CD4-positive, alpha-beta memory T cell (primary cell): ENCODE measurements at regions of chr19 and their contacts with region 1.

Region 1: GRCh38 chr19:32224371-32225244 is 120.8 kb upstream of the ZNF507 start:
- DNase-seq: peak in 4 of 5 donors; percentile 43 to 50 (median 46)
- H3K4me3 ChIP-seq: no peak overlapping the region
- H3K4me3 Mint-ChIP-seq: peak overlapping the region; percentile 71 to 85 (median 80)
- H3K27ac ChIP-seq: no peak overlapping the region
- H3K27ac Mint-ChIP-seq: no peak overlapping the region
- H3K4me1 ChIP-seq: peaks cover 11% of the 10 kb centered on the region
- H3K4me1 Mint-ChIP-seq: peaks cover 5 to 16% (median 6%) of the 10 kb centered on the region in 4 donors
- H3K27me3 ChIP-seq: peaks cover 14% of the 10 kb centered on the region
- H3K27me3 Mint-ChIP-seq: peaks cover 17 to 39% of the 10 kb centered on the region in 2 donors

Region 2: DNA sequence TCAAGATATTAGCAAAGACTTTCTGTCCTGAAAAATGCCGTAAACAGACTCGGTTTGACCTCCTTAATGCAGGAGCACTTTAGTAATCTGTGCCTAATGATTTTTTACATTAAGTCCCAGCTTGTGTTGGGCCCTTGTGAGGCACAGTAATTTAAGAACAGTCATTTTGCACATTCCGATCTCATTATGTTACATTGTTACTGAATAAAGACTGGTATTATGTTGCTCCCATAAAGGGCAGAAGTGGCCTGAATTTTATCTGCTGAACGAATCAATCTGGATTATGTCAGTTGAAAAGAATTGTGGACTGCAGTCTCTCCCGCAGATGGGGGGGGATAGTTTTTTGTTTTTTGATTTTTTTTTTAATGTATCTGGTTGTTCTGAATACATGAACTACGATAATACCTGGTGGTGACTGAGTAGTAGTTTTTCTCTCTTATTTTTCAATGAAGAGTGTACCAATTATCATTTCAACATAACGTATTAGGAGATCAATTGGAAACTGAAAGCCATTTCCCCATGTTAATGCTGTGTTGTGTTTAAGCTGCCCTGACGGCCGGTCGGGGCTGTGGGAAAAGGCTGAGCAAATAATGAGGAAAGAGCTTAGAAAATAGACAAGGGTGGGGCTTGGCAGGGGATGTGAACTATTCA is 1562.3 kb before region 1 on chr19:
- CTCF ChIA-PET with region 1: interaction called, 71 read pairs
- POLR2A ChIA-PET with region 1: no interaction called
- intact Hi-C with region 1: loop called (anchors 1 kb)
- DNase-seq: no peak
- H3K4me3 ChIP-seq: no peak overlapping the region
- H3K4me3 Mint-ChIP-seq: no peak overlapping the region
- H3K27ac ChIP-seq: no peak overlapping the region
- H3K27ac Mint-ChIP-seq: no peak overlapping the region
- H3K4me1 ChIP-seq: no peaks in the 10 kb centered on the region
- H3K4me1 Mint-ChIP-seq: no peaks in the 10 kb centered on the region
- H3K27me3 ChIP-seq: no peaks in the 10 kb centered on the region
- H3K27me3 Mint-ChIP-seq: peaks cover 12 to 17% of the 10 kb centered on the region in 2 donors

Region 3: DNA sequence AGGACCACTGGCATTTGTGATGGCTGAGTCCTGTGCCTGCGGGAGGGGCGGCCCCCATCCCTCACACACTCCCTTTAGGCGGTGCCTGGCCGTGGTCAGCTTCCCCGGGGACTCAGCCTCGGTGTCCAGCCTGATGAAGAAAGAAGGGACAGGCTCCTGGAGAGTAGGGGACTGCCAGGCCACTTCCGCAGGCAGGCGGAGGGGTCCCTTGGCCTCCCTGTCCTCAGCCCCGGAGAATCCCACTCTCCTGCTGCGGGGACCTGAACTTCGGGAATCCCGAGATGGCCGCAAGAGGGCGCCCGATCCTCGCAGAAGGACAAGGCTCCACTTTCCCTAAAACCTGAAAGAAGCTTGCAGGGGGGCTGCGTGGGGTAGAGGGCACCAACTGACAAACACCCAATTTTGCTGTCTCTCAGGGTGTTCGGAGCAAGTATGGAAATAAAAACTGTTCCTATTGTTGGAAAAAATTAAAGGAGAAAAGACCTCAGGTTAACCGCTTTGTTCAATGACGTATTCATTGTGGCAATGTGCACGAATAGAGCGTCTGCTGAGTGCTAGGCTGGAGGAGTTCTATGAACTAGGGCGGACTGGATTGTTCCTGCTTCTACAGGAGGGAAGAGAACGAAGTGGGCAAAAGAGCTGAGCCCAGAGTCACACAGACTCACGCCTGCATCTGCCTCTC is 1555.1 kb before region 1 on chr19:
- CTCF ChIA-PET with region 1: interaction called, 71 read pairs
- POLR2A ChIA-PET with region 1: no interaction called
- intact Hi-C with region 1: loop called (anchors 1 kb)
- DNase-seq: peak in 4 of 5 donors; percentile 5 to 23 (median 12)
- H3K4me3 ChIP-seq: no peak overlapping the region
- H3K4me3 Mint-ChIP-seq: no peak overlapping the region
- H3K27ac ChIP-seq: no peak overlapping the region
- H3K27ac Mint-ChIP-seq: no peak overlapping the region
- H3K4me1 ChIP-seq: no peaks in the 10 kb centered on the region
- H3K4me1 Mint-ChIP-seq: no peaks in the 10 kb centered on the region
- H3K27me3 ChIP-seq: peaks cover 5% of the 10 kb centered on the region
- H3K27me3 Mint-ChIP-seq: peaks cover 10 to 31% of the 10 kb centered on the region in 2 donors

Region 4: GRCh38 chr19:30682999-30683536 is 1541.5 kb before region 1 on chr19:
- CTCF ChIA-PET with region 1: interaction called, 90 read pairs
- POLR2A ChIA-PET with region 1: no interaction called
- intact Hi-C with region 1: loop called (anchors 1 kb)
- DNase-seq: peak in 4 of 5 donors; percentile 26 to 41 (median 33)
- H3K4me3 ChIP-seq: no peak overlapping the region
- H3K4me3 Mint-ChIP-seq: no peak overlapping the region
- H3K27ac ChIP-seq: no peak overlapping the region
- H3K27ac Mint-ChIP-seq: no peak overlapping the region
- H3K4me1 ChIP-seq: no peaks in the 10 kb centered on the region
- H3K4me1 Mint-ChIP-seq: peaks cover 0 to 1% (median 0%) of the 10 kb centered on the region in 4 donors
- H3K27me3 ChIP-seq: no peaks in the 10 kb centered on the region
- H3K27me3 Mint-ChIP-seq: peaks cover 23 to 28% of the 10 kb centered on the region in 2 donors

Region 5: GRCh38 chr19:30784850-30785457 is 1439.7 kb before region 1 on chr19:
- CTCF ChIA-PET with region 1: interaction called, 40 read pairs
- POLR2A ChIA-PET with region 1: no interaction called
- intact Hi-C with region 1: no loop called
- DNase-seq: peak; percentile 32 to 52 (median 43)
- H3K4me3 ChIP-seq: no peak overlapping the region
- H3K4me3 Mint-ChIP-seq: no peak overlapping the region
- H3K27ac ChIP-seq: no peak overlapping the region
- H3K27ac Mint-ChIP-seq: no peak overlapping the region
- H3K4me1 ChIP-seq: no peaks in the 10 kb centered on the region
- H3K4me1 Mint-ChIP-seq: no peaks in the 10 kb centered on the region
- H3K27me3 ChIP-seq: no peaks in the 10 kb centered on the region
- H3K27me3 Mint-ChIP-seq: peaks cover 4 to 18% of the 10 kb centered on the region in 2 donors

Region 6: GRCh38 chr19:31054430-31054829 is 1170.2 kb before region 1 on chr19:
- CTCF ChIA-PET with region 1: interaction called, 12 read pairs
- POLR2A ChIA-PET with region 1: no interaction called
- intact Hi-C with region 1: no loop called
- DNase-seq: peak in 4 of 5 donors; percentile 24 to 33 (median 28)
- H3K4me3 ChIP-seq: no peak overlapping the region
- H3K4me3 Mint-ChIP-seq: no peak overlapping the region
- H3K27ac ChIP-seq: no peak overlapping the region
- H3K27ac Mint-ChIP-seq: no peak overlapping the region
- H3K4me1 ChIP-seq: no peaks in the 10 kb centered on the region
- H3K4me1 Mint-ChIP-seq: no peaks in the 10 kb centered on the region
- H3K27me3 ChIP-seq: no peaks in the 10 kb centered on the region
- H3K27me3 Mint-ChIP-seq: peaks cover 13 to 29% of the 10 kb centered on the region in 2 donors

Region 7: GRCh38 chr19:31349160-31349881 is 875.3 kb before region 1 on chr19 and contains the start of gene TSHZ3:
- CTCF ChIA-PET with region 1: interaction called, 3 read pairs
- POLR2A ChIA-PET with region 1: no interaction called
- intact Hi-C with region 1: loop called (anchors 10 kb)
- DNase-seq: peak; percentile 49 to 57 (median 55)
- H3K4me3 ChIP-seq: peak within 1 kb of the TSS in 1 of 2 donors; percentile 47
- H3K4me3 Mint-ChIP-seq: peak within 1 kb of the TSS; percentile 81 to 90 (median 86)
- H3K27ac ChIP-seq: no peak within 1 kb of the TSS
- H3K27ac Mint-ChIP-seq: peak within 1 kb of the TSS in 3 of 7 donors; percentile 52 to 79 (median 59)
- H3K4me1 ChIP-seq: peaks cover 43% of the 10 kb centered on the region
- H3K4me1 Mint-ChIP-seq: peaks cover 23 to 40% (median 34%) of the 10 kb centered on the region in 4 donors
- H3K27me3 ChIP-seq: peaks cover 50% of the 10 kb centered on the region
- H3K27me3 Mint-ChIP-seq: peaks cover 33 to 43% of the 10 kb centered on the region in 2 donors
- total RNA-seq, gene TSHZ3: 0.28 to 0.44 TPM